GM12878 (cell line): ENCODE measurements at regions of chr7 and their contacts with region 1.

Region 1: DNA sequence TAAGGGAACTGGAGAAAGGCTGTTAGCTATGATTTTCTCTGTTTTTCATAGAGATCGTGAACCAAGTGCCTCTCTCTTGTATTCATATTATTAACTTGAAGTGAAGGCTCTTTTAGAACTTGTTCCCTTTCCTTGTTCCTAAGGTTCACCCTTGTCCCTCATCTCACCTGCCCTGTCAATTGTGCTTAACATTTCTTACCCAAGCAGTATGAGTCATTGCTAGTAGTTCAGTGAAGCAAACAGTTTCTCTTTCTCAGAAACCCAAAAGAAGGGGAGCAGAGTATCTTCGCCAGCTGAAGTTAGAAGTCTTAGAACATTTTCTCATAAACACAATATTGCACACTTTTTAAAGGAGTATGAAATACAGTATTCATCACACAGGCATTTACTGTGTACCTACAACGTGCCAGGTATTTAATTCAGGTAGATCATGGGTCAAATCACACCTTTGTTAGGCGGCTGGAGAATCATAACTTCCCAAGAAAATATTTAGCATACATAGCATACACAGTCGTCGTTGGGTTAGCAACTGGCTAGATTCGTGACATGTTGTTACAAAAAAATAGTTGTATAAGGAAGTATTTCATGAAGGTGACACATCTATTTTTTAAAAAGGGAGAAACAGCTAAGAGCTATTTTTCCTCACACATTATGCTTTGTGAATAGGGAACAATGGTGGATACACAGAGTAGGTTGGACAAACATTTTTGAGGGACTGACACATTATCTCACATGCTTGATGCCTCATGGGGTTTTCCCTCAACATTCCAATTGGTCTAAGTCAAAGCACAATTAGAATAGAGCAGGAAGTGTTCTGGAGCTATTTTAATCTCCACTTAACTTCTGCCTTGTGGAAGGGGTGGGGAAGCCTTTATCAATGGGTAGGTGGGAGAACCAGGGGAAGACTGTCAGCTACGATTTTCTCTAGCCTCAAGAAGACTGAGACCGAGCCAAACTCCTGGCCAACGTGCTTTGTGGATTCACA is 13.2 kb downstream of the HDAC9 start:
- DNase-seq: no peak
- ATAC-seq: peak; percentile 91
- H3K4me3 ChIP-seq: peak overlapping the region; percentile 47
- H3K27ac ChIP-seq: peak overlapping the region; percentile 80
- H3K4me1 ChIP-seq: peaks cover 20% of the 10 kb centered on the region
- H3K27me3 ChIP-seq: no peaks in the 10 kb centered on the region
- CTCF ChIP-seq: no peak
- EP300 ChIP-seq: no peak
- POLR2A ChIP-seq: peak; percentile 18
- RAD21 ChIP-seq: no peak

Region 2: GRCh38 chr7:17792075-17792936 is 716.4 kb before region 1 on chr7:
- CTCF ChIA-PET with region 1: no interaction called
- POLR2A ChIA-PET with region 1: no interaction called
- RAD21 ChIA-PET with region 1: no interaction called
- SMC1A ChIA-PET with region 1: no interaction called
- in situ Hi-C with region 1: no loop called
- intact Hi-C with region 1: no loop called
- DNase-seq: no peak
- ATAC-seq: no peak
- H3K4me3 ChIP-seq: no peak overlapping the region
- H3K27ac ChIP-seq: no peak overlapping the region
- H3K4me1 ChIP-seq: no peaks in the 10 kb centered on the region
- H3K27me3 ChIP-seq: no peaks in the 10 kb centered on the region
- CTCF ChIP-seq: no peak
- EP300 ChIP-seq: no peak
- POLR2A ChIP-seq: no peak
- RAD21 ChIP-seq: no peak

Region 3: DNA sequence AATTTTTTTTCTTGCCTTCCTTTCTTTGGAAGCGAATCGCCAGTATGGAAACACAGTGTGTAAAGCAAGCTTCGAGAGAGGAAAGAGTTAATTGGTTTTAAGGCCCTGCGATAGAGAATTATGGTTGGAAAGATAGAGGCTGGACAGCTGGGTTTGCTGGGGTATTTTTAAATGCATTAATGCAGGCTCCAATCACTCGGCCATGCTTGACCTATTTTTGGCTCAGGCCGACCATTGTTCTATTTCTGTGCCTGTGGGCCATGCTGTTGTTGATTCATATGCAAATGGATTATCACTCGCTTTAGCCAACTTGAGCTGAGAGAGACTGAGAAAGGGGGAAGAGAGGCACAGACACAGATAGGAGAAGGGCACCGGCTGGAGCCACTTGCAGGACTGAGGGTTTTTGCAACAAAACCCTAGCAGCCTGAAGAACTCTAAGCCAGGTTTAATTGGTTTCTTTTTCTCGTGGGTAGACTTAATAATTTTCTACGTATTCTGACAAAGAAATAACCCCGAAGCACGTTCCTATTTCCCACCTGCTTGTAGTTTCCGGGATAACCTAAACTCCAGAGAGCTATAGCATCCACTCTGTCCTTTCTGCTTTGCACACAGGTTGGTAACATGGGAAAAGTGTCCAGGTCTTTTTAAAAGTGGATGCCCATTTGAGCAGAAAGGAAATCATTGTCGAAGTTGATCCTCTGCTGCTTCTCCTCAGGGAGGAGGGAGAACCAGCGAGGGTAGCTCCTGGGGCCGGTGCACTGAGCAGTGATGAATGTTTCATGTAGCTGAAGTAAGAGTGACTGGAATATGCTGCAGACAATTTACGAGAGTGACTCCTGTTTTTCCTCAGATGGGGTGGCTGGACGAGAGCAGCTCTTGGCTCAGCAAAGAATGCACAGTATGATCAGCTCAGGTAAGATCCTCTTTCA is 13.1 kb before region 1 on chr7 and contains the start of gene HDAC9:
- CTCF ChIA-PET with region 1: interaction called, 25 read pairs
- POLR2A ChIA-PET with region 1: interaction called, 7 read pairs
- RAD21 ChIA-PET with region 1: interaction called, 6 read pairs
- SMC1A ChIA-PET with region 1: interaction called, 11 read pairs
- in situ Hi-C with region 1: no loop called
- intact Hi-C with region 1: no loop called
- DNase-seq: peak; percentile 56
- ATAC-seq: peak; percentile 89
- H3K4me3 ChIP-seq: peak within 1 kb of the TSS; percentile 67
- H3K27ac ChIP-seq: no peak within 1 kb of the TSS; the same call in 1 of the 2 replicates
- H3K4me1 ChIP-seq: peaks cover 14% of the 10 kb centered on the region; the same call in 1 of the 2 replicates
- H3K27me3 ChIP-seq: no peaks in the 10 kb centered on the region
- CTCF ChIP-seq: no peak
- EP300 ChIP-seq: no peak
- POLR2A ChIP-seq: 0 out of 2 replicates have a peak, but pooled peaks have one; percentile 39
- RAD21 ChIP-seq: no peak
- polyA plus RNA-seq, gene HDAC9: 0.73 to 0.74 TPM

Region 4: GRCh38 chr7:18520450-18521235 is 11.9 kb after region 1 on chr7:
- CTCF ChIA-PET with region 1: interaction called, 5 read pairs
- POLR2A ChIA-PET with region 1: interaction called, 5 read pairs
- RAD21 ChIA-PET with region 1: interaction called, 4 read pairs
- SMC1A ChIA-PET with region 1: interaction called, 42 read pairs
- in situ Hi-C with region 1: no loop called
- intact Hi-C with region 1: no loop called
- DNase-seq: no peak
- ATAC-seq: peak; percentile 75
- H3K4me3 ChIP-seq: no peak overlapping the region
- H3K27ac ChIP-seq: peak overlapping the region; percentile 79
- H3K4me1 ChIP-seq: no peaks in the 10 kb centered on the region
- H3K27me3 ChIP-seq: no peaks in the 10 kb centered on the region
- CTCF ChIP-seq: no peak
- EP300 ChIP-seq: no peak
- POLR2A ChIP-seq: no peak
- RAD21 ChIP-seq: no peak

Region 5: GRCh38 chr7:19177269-19177668 is 668.5 kb after region 1 on chr7:
- CTCF ChIA-PET with region 1: no interaction called
- POLR2A ChIA-PET with region 1: no interaction called
- RAD21 ChIA-PET with region 1: no interaction called
- SMC1A ChIA-PET with region 1: no interaction called
- in situ Hi-C with region 1: no loop called
- intact Hi-C with region 1: no loop called
- DNase-seq: no peak
- ATAC-seq: no peak
- H3K4me3 ChIP-seq: no peak overlapping the region
- H3K27ac ChIP-seq: no peak overlapping the region
- H3K4me1 ChIP-seq: no peaks in the 10 kb centered on the region
- H3K27me3 ChIP-seq: no peaks in the 10 kb centered on the region
- CTCF ChIP-seq: no peak
- EP300 ChIP-seq: no peak
- POLR2A ChIP-seq: no peak
- RAD21 ChIP-seq: no peak